ENCODE measurements at regions of chr18 and their contacts with region 1.

Region 1: GRCh38 chr18:23452728-23453679 is at the start of gene RIOK3:
- DNase-seq: peak; percentile 92
- H3K4me3 Mint-ChIP-seq: peak within 1 kb of the TSS; percentile 92
- H3K27ac Mint-ChIP-seq: peak within 1 kb of the TSS; percentile 88
- H3K4me1 Mint-ChIP-seq: peaks cover 35% of the 10 kb centered on the region
- H3K27me3 Mint-ChIP-seq: peaks cover 6% of the 10 kb centered on the region
- total RNA-seq, gene RIOK3: 53.4 and 55.4 TPM in 2 replicates

Region 2: DNA sequence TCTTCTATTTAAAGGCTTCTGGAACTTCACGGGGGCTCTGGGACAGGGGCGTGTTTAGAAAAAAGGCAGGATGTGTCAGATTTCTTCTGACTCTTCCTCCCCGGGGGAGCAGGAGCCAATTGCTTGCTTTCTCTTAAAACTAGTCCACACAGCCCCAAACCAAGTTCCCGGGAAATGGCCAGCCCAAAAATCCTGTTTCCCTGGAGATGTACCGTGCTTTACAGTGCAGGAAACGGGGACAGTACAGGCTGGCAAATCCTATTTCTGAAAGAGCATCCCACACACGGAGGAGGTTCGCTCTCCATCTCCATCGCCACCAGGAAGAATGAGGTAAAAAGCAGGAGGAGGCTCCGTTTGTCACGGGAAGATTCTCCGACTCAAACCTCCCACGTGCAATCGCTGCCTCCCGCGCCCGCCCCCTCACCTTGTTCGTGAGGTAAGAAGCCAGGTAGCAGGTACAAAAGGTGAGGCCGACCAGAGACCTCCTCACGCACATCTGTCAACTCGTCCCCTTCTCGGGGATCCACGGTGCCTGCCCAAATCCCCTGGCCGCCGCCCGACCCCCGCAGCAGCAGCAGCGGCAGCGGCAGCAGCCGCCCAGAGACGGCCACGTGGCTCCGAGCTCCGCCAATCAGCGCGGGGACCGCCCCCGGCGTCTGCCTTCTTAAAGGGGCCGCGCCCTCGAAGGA is 15.5 kb before region 1 on chr18:
- intact Hi-C with region 1: loop called (anchors 1 kb)
- DNase-seq: peak; percentile 75
- H3K4me3 Mint-ChIP-seq: peak overlapping the region; percentile 85
- H3K27ac Mint-ChIP-seq: peak overlapping the region; percentile 39
- H3K4me1 Mint-ChIP-seq: peaks cover 11% of the 10 kb centered on the region
- H3K27me3 Mint-ChIP-seq: peaks cover 3% of the 10 kb centered on the region

Region 3: GRCh38 chr18:23487738-23488570 is 35.0 kb after region 1 on chr18:
- intact Hi-C with region 1: loop called (anchors 2 kb)
- DNase-seq: peak; percentile 38
- H3K4me3 Mint-ChIP-seq: peak overlapping the region; percentile 65
- H3K27ac Mint-ChIP-seq: peak overlapping the region; percentile 87
- H3K4me1 Mint-ChIP-seq: peaks cover 12% of the 10 kb centered on the region
- H3K27me3 Mint-ChIP-seq: no peaks in the 10 kb centered on the region

Region 4: GRCh38 chr18:24947521-24948305 is 1494.7 kb after region 1 on chr18:
- intact Hi-C with region 1: no loop called
- DNase-seq: no peak
- H3K4me3 Mint-ChIP-seq: no peak overlapping the region
- H3K27ac Mint-ChIP-seq: no peak overlapping the region
- H3K4me1 Mint-ChIP-seq: no peaks in the 10 kb centered on the region
- H3K27me3 Mint-ChIP-seq: no peaks in the 10 kb centered on the region